HEK293T (cell line): ENCODE measurements at regions of chr1 and their contacts with region 1.

Region 1: DNA sequence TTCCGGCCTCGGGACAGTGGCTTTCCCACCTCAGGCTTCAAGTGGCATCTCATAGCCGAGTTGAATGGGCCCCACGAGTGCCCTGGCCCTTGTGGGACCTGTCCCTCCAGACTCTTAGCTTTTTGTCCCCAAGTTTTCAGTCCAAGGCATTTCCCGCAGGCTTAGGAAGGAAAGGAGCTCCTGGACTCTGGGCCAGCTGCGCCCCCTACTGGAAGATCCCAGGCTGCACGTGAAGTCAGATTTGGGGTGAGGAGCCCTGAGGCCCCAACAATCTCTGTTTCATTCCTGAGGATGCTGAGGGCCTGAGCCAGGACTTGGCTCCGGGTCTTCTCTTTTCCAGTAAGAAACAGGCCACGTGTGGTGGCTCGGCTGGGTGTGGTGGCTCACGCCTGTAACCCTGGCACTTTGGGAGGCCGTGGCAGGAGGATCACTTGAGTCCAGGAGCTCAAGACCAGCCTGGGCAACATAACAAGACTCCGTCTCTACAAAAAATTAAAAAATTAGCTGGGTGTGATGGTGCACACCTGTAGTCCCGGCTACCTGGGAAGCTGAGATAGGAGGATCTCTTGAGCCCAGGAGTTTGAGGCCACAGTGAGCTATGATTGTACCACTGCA is 67.4 kb downstream of the ARHGEF10L start:
- DNase-seq: peak; percentile 72

Region 2: DNA sequence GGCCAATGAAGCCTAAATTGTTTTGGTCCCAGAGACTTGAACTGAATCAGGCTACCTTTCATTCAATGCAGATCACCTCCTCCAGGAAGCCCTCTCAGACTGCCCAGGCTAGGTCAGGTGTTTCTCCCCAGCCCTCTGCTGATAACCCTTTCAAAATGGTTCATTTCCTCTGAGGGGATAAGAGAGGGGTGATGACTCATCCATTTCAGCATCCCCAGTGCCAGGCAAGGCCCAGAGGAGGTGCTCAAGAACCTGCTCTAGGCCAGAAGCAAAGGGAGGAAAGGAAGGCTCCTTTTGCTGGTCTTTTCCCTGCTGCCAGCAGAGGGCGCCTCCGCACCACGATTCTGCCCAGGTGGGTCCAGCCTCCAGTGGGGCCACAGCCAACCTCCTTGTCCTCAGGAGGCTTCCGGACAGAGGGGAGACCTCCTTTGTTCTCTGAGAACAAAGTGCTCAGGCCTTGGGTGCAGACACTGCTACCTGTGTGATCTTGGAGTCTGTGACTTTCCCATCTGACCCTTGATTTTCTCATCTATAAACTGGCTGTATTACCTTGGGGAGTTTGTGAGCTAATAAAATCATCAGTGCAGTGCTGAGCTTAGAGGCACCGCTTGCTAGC is 112.7 kb before region 1 on chr1:
- CTCF ChIA-PET with region 1: interaction called, 17 read pairs
- POLR2A ChIA-PET with region 1: interaction called, 3 read pairs
- DNase-seq: peak; percentile 86

Region 3: GRCh38 chr1:17502326-17502778 is 104.6 kb before region 1 on chr1:
- CTCF ChIA-PET with region 1: interaction called, 54 read pairs
- POLR2A ChIA-PET with region 1: no interaction called
- DNase-seq: peak; percentile 83

Region 4: DNA sequence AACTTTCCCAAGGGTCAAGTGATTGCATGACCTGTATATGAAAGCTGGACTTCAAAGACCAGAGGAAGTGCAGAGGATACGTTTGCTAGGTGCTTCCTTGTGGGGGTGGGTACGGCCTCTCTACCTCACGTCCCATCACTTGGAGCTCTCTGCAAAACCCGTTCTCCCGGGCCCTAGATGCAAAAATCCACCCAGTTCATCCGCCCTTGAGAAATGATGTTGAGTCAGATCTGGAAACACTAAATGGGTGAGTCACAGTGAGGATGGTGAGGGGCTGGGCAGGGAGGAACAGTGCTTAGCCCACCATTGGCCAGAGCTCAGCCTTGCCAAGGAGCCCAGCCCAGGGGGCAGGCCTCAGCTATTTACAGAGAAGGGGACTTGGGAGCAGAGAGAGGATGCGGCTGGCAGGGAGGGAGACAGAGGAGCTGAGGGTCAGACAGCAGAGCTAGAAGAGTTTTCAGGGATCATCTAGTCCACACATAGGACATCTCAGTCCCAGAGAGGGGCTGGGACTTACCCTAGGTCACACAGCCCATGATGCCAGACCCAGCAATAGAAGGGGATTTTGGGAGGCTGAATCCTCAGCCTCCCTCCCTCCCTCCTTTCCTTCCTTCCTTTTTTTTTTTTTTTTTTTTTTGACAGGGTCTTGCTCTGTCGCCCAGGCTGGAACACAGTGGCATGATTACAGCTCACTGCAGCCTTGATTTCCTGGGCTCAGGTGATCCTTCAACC is 52.8 kb before region 1 on chr1:
- CTCF ChIA-PET with region 1: no interaction called
- POLR2A ChIA-PET with region 1: no interaction called
- DNase-seq: no peak

Region 5: DNA sequence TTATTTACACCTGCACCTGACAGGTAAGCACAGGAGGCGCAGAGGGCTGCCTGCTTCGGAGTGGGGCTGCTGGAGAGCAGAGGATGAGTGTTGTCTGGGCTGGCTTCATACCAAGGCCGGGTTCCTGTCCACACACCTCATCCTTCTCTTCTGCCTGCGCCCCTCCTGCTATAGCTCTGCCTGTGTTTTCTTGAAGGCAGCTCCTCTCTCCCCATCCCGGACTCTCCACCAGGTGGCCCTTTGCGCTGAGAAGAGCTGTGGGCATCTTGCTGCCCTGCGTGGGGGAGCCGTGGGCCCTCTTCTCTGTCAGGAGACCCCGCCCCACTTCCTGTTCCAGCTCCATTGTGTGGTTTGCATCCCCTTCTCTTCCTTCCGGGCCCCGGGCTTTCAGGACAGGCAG is 32.4 kb before region 1 on chr1:
- CTCF ChIA-PET with region 1: interaction called, 11 read pairs
- POLR2A ChIA-PET with region 1: no interaction called
- DNase-seq: no peak

Region 6: GRCh38 chr1:17596651-17597509 is 10.1 kb before region 1 on chr1:
- CTCF ChIA-PET with region 1: interaction called, 15 read pairs
- POLR2A ChIA-PET with region 1: no interaction called
- DNase-seq: peak; percentile 77